Esophagus muscularis mucosa (tissue), 4 donors: ENCODE measurements at regions of chr7 and their contacts with region 1.

Region 1: DNA sequence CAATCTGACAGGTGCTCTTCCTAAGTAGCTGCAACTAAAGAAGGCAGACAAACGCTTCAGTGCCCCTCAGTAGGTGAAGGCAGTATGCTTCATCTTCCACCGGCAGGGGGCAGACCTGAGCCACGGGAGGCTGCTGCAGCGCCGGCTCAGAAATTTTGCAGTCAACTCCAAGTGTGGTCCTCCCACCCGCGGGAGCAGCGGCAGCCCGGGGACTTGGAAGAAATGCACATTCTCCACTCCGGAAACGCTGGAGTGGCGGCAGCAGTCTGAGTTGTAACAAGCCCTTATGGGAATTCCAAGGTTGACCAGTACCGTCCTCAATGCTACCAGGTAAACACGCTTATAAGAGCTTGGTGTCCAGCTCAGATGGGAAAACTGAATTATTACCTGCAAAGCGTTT is 3.4 kb downstream of the IGFBP3 start:
- DNase-seq: peak; percentile 93
- H3K4me3 ChIP-seq: peak overlapping the region in 3 of 4 donors; percentile 10 to 22 (median 21)
- H3K27ac ChIP-seq: no peak overlapping the region
- H3K4me1 ChIP-seq: peaks cover 26 to 46% (median 42%) of the 10 kb centered on the region in 4 donors
- H3K27me3 ChIP-seq: peaks cover 0 to 74% (median 19%) of the 10 kb centered on the region in 4 donors
- CTCF ChIP-seq: peak; percentile 82 to 97 (median 93)
- EP300 ChIP-seq: no peak
- POLR2A ChIP-seq: no peak

Region 2: DNA sequence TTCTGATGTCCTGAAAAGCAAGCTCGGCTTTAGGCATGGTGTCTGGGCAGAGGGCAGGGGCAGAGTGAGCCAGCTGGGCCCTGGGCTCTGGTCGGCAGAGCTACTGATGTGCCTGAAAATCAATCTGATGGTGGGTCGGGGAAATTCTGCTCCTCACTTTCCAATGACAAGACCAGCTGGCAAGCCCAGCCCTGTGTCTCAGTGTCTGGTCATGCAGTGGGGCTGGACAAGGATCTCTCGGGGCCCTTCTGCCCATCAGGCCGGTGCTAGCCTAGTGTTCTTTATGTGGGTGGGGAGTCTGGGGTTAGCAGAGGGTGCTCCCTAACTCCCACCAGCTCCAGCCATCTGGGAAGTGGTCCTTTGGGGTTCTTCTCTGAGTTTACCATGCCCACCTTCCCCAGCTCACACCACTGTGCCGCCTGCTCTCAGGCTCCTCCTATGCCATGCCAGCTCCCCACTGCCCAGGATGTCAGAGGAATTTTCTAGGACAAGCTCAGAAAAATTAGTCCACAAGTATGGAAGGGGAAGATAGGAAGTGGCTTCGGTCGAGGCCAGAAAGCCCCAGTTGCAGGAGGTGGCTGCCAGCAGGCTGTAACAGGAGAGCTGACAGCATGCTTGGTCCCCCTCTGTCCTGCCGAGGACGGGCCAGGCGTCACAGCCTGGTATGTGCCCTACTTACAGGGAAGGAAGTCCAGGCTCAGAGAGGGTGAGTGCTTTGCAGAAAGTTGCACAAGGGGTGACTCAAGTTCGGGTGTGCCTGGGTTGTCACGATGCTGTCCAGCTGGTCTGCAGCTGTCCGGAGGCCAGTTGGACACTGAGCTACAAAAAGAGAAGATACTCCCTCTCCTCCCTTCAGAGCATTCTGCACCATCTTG is 208.3 kb before region 1 on chr7:
- intact Hi-C with region 1: no loop called
- DNase-seq: peak; percentile 92
- H3K4me3 ChIP-seq: no peak overlapping the region
- H3K27ac ChIP-seq: peak overlapping the region; percentile 19 to 53 (median 34)
- H3K4me1 ChIP-seq: peaks cover 0 to 5% (median 2%) of the 10 kb centered on the region in 4 donors
- H3K27me3 ChIP-seq: no peaks in the 10 kb centered on the region
- CTCF ChIP-seq: no peak
- EP300 ChIP-seq: no peak
- POLR2A ChIP-seq: no peak

Region 3: GRCh38 chr7:46352004-46352954 is 434.6 kb after region 1 on chr7:
- intact Hi-C with region 1: loop called (anchors 5 kb)
- DNase-seq: no peak
- H3K4me3 ChIP-seq: no peak overlapping the region
- H3K27ac ChIP-seq: no peak overlapping the region
- H3K4me1 ChIP-seq: no peaks in the 10 kb centered on the region
- H3K27me3 ChIP-seq: peaks cover 0 to 7% (median 0%) of the 10 kb centered on the region in 4 donors
- CTCF ChIP-seq: peak; percentile 27 to 49 (median 47)
- EP300 ChIP-seq: no peak
- POLR2A ChIP-seq: no peak

Region 4: DNA sequence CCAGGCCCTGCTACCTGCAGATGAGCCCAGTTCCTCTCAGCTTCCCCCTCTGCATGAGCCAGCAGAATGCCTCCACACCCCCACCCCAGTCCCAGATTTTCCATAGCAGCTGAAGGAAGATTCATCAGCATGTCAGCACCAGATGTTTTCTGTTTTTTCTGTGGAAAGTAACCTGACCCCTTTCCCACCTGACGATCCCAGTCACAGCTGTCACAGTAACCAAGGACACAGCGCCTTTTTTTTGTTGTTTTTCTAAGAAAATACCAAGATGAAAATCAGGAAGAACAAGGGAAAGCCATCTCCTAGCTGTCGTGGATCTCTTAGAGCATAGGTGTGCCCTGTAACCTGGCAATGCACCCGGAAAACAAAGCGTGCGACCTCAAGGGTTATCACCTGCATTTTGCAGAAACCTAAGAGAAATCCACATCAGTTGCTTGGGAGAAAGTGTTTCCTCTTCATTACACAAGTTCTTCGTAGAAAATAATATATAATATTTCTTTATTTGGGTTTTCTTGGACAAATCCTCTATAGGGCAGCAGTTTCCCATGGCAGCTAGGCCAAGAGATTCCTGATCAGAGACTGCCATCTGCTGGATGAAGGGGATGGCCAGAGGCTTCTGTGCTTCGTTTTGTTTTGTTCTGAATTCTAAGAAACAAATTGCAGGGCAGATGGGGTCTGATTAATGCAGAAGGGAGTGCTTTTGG is 1262.3 kb after region 1 on chr7:
- intact Hi-C with region 1: loop called (anchors 2 kb)
- DNase-seq: no peak
- H3K4me3 ChIP-seq: no peak overlapping the region
- H3K27ac ChIP-seq: no peak overlapping the region
- H3K4me1 ChIP-seq: peaks cover 25 to 50% (median 48%) of the 10 kb centered on the region in 4 donors
- H3K27me3 ChIP-seq: no peaks in the 10 kb centered on the region
- CTCF ChIP-seq: peak; percentile 82 to 89 (median 84)
- EP300 ChIP-seq: no peak
- POLR2A ChIP-seq: no peak